ENCODE measurements at regions of chr2 and their contacts with region 1.

Region 1: DNA sequence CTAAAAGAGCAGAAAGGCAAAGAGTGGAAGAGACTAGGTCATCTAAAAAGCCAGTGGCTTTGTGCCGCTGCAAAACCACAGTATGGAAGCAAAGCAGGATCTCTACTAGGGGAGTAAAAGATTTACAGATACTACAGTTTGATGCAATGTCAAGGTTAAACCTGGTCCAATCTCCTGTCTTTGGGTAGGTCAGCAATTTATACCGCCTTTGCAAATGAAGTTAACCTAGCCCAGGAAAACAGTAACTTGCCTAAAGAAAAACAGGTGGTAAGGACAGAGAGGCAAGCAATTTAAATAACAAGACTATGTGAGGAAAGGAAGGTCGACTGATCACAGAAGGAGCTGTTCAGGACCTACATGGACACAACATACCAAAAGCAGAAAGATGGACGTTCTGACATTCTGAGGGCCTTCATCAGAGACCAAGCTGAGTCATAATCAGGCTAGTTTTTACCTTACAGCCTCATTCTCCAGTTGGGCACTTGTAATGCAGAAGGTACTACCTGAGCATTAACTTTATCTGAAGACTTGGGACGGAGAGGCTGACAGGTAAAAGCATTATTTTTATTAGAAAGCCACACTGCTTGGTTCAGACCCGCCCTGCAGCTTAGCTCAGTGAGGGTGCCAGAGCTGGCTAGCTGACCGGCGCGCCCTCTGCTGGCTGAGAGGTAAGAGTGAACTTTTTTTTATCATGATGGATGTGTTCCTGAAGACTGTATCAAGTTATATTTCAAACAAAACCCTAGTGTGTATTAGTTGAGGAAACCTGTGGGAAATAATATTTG is 15.9 kb downstream of the CDKL4 start:
- DNase-seq: peak; percentile 78 to 90 (median 90)
- ATAC-seq: peak; percentile 87 to 89
- H3K4me3 ChIP-seq: peak overlapping the region; percentile 56
- H3K27ac ChIP-seq: no peak overlapping the region
- H3K4me1 ChIP-seq: no peaks in the 10 kb centered on the region
- H3K27me3 ChIP-seq: no peaks in the 10 kb centered on the region

Region 2: DNA sequence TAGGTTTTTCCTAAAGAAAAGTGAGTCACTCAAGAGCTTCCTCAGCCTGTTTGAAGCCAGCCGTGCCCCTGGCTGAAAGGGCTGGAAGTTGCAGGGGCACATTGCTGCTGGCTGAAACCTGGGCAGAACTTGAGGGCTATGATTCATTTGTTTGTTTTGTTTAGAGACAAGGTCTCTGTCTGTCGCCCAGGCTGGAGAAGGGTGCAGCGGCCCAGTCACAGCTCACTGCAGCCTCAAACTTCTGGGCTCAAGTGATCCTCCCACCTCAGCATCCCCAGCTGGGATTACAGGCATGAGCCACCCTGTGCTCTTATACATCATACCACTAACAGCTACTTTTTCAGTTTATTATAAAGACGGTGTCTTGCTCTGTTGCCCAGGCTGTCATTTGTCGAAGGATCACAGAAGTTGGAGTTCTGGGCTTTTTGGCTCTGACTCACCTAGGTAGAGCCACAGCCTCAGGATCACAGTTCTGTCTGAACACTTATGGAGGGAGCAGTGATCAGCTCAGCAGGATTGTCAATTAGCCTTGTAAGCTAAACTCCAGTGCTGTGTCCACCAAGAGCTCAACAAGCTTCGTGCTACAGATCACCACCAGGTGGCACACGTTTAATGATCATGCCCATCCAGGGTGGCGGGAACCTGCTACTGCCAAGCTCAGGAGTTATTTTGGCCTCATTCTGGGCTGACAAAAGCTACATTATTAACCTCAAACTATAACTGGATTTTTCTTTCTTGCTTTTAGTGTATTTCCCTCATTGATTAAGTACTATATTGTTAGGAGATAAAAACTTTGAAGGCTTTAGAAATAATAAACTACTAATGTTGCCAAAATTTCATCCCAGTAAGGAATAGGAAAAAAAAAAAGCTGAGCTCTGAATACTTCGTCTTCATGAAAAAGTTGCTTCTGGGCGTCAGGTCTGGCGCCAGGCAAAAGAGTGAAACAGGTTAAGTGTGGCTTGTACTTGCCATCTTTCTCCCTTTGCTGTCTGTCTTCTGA is 280.3 kb before region 1 on chr2:
- intact Hi-C with region 1: loop called in 2 of 4 experiments (anchors 10 kb)
- DNase-seq: peak; percentile 62 to 84 (median 71)
- ATAC-seq: peak; percentile 71 to 77
- H3K4me3 ChIP-seq: no peak overlapping the region
- H3K27ac ChIP-seq: no peak overlapping the region
- H3K4me1 ChIP-seq: no peaks in the 10 kb centered on the region
- H3K27me3 ChIP-seq: no peaks in the 10 kb centered on the region

Region 3: GRCh38 chr2:39062320-39062719 is 165.5 kb before region 1 on chr2:
- intact Hi-C with region 1: loop called (anchors 2 to 5 kb)
- DNase-seq: no peak
- ATAC-seq: no peak
- H3K4me3 ChIP-seq: no peak overlapping the region
- H3K27ac ChIP-seq: no peak overlapping the region
- H3K4me1 ChIP-seq: no peaks in the 10 kb centered on the region
- H3K27me3 ChIP-seq: no peaks in the 10 kb centered on the region

Region 4: DNA sequence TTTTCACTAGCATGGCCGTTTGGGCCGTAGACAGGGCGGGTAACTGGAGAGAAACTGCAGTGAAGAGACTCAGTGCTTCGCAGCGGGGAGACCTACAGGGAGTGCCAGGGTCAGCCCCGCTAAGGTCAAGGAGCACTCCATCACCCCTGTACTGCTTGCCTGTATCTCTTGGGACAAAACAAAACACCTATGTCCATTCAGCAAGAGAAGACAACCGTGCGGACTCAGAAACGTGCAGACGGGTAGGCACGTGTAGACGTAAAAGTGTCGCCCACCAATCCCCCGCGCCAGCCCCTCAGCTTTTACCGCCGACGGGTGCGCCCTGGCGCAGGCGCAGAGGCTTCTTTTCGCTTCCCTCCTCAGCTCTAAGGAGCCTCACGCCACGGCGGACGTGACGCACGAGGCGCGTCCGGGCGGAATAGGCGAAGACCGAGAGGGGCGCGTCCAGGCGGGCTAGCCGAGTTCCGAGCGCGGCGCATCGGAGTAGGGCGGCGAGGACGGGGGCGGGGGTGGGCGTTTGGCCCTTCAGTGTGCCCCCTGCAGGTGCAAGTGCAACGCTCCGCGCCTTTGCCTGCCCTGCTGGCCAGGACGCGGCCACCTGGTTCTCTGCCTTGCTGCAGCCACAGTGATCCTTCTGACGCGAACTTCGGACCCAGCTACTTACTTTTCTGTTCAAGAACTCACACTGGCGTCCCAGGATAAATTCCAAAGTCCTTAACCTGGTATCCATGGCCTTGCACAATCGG is 103.6 kb before region 1 on chr2:
- intact Hi-C with region 1: loop called in 3 of 4 experiments (anchors 5 kb)
- DNase-seq: peak; percentile 98 to 99 (median 99)
- ATAC-seq: peak; percentile 94 to 95
- H3K4me3 ChIP-seq: peak overlapping the region; percentile 88
- H3K27ac ChIP-seq: peak overlapping the region; percentile 88
- H3K4me1 ChIP-seq: no peaks in the 10 kb centered on the region
- H3K27me3 ChIP-seq: no peaks in the 10 kb centered on the region

Measured in right cardiac atrium (tissue), 5 donors.